IMR-90 (cell line): ENCODE measurements at regions of chr14 and their contacts with region 1.

Region 1: DNA sequence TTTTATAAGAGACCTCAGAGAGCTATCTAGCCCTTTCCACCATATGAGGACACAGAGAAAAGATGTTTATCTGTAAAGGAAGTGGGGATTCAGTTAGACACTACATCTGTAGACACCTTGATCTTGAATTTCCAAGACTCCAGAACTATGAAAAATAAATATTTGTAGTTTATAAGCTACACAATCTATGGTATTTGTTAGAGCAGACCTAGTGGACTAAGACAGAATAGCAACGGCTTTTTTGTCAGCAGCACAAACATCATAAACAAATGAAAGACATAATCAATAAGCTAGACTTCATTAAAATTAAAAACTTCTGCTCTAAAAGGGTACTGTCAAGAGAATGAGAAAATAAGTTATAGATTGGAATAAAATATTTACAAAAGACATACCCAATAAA is 810.1 kb downstream of the FSCB start:
- DNase-seq: no peak
- ATAC-seq: no peak
- H3K4me3 ChIP-seq: no peak overlapping the region
- H3K27ac ChIP-seq: no peak overlapping the region
- H3K4me1 ChIP-seq: no peaks in the 10 kb centered on the region
- H3K27me3 ChIP-seq: no peaks in the 10 kb centered on the region
- CTCF ChIP-seq: no peak
- POLR2A ChIP-seq: no peak
- RAD21 ChIP-seq: no peak

Region 2: GRCh38 chr14:43665570-43666267 is 31.3 kb before region 1 on chr14:
- CTCF ChIA-PET with region 1: no interaction called
- POLR2A ChIA-PET with region 1: no interaction called
- dilution Hi-C with region 1: no loop called
- in situ Hi-C with region 1: no loop called
- intact Hi-C with region 1: loop called (anchors 1 kb)
- DNase-seq: no peak
- ATAC-seq: no peak
- H3K4me3 ChIP-seq: no peak overlapping the region
- H3K27ac ChIP-seq: no peak overlapping the region
- H3K4me1 ChIP-seq: no peaks in the 10 kb centered on the region
- H3K27me3 ChIP-seq: no peaks in the 10 kb centered on the region
- CTCF ChIP-seq: no peak
- POLR2A ChIP-seq: no peak
- RAD21 ChIP-seq: no peak